ENCODE measurements at regions of chr16 and their contacts with region 1.

Region 1: DNA sequence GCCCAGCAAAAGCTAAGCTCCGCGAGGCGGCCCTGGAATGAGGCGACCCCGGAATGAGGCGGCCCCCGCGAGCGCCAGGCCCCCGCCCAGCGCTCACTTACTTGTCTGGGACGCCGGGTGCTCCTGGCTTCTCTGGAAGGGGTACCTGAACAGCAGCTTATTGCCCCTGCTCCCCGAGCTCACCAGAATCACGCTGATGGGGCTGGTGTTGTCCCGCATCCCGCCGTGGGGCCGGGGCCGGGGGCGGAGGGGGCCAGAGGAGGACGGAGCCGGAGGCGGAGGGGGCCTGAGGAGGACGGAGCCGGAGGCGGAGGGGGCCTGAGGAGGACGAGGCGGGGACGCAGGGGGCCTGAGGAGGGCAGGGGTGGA is 440 bp downstream of the NPRL3 start:
- DNase-seq: peak in 2 of 10 donors; percentile 47 to 58
- H3K4me3 ChIP-seq: peak overlapping the region; percentile 56 to 95 (median 80)
- H3K27ac ChIP-seq: peak overlapping the region in 21 of 59 donors; percentile 2 to 83 (median 34)
- H3K27me3 ChIP-seq: no peaks in the 10 kb centered on the region
- CTCF ChIP-seq: no peak

Region 2: DNA sequence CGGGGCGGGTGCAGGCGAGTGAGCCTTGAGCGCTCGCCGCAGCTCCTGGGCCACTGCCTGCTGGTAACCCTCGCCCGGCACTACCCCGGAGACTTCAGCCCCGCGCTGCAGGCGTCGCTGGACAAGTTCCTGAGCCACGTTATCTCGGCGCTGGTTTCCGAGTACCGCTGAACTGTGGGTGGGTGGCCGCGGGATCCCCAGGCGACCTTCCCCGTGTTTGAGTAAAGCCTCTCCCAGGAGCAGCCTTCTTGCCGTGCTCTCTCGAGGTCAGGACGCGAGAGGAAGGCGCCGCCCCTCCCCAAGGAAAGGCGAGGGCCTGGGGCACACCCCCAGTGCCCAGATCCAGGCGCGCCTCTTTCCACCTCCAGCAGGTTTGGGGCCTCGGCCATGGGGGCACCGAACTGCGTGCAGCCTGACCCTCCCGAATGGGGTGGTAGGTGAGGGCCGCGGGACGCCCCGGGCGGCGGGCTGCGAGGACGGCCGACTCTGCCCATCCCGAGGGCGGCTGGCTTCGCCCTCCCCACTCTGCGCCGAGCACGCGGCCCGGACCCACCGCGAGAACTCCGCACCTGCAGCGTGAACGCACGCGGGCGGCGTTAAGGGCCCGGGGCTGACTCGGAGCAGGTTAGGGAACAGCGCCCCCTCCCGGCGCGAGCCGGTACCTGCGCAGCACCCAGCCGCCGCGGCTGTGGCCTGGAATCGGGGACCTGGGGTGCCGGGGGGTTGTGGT is 43.1 kb after region 1 on chr16:
- intact Hi-C with region 1: loop called in 1 of 2 experiments (anchors 2 kb)
- DNase-seq: peak; percentile 53 to 79 (median 65)
- H3K4me3 ChIP-seq: peak overlapping the region; percentile 25 to 65 (median 47)
- H3K27ac ChIP-seq: peak overlapping the region in 1 of 59 donors; percentile 26
- H3K27me3 ChIP-seq: peaks cover 0 to 38% (median 25%) of the 10 kb centered on the region in 45 donors
- CTCF ChIP-seq: peak; percentile 81 to 98 (median 94)

Region 3: GRCh38 chr16:200388-200787 is 62.4 kb after region 1 on chr16:
- intact Hi-C with region 1: no loop called
- DNase-seq: no peak
- H3K4me3 ChIP-seq: no peak overlapping the region
- H3K27ac ChIP-seq: peak overlapping the region in 4 of 59 donors; percentile 21 to 51 (median 31)
- H3K27me3 ChIP-seq: no peaks in the 10 kb centered on the region
- CTCF ChIP-seq: no peak